ENCODE measurements at regions of chr1 and their contacts with region 1.

Region 1: GRCh38 chr1:15038232-15039016 is 115.1 kb upstream of the TMEM51 start:
- DNase-seq: peak; percentile 47
- H3K4me3 ChIP-seq: no peak overlapping the region
- H3K27ac ChIP-seq: no peak overlapping the region
- H3K4me1 ChIP-seq: no peaks in the 10 kb centered on the region
- H3K27me3 ChIP-seq: no peaks in the 10 kb centered on the region

Region 2: GRCh38 chr1:14923727-14924452 is 114.5 kb before region 1 on chr1:
- in situ Hi-C with region 1: loop called (anchors 10 kb)
- DNase-seq: peak; percentile 92
- H3K4me3 ChIP-seq: peak overlapping the region; percentile 51
- H3K27ac ChIP-seq: no peak overlapping the region
- H3K4me1 ChIP-seq: peaks cover 6% of the 10 kb centered on the region; the same call in 1 of the 2 replicates
- H3K27me3 ChIP-seq: no peaks in the 10 kb centered on the region

Measured in GM23248 (cell line).